Panc1 (cell line): ENCODE measurements at regions of chr15 and their contacts with region 1.

Region 1: GRCh38 chr15:44738340-44738984 is 2.1 kb downstream of the TRIM69 start:
- DNase-seq: no peak
- ATAC-seq: no peak
- H3K4me3 ChIP-seq: no peak overlapping the region
- H3K27ac ChIP-seq: no peak overlapping the region
- H3K4me1 ChIP-seq: peaks cover 19% of the 10 kb centered on the region
- H3K27me3 ChIP-seq: no peaks in the 10 kb centered on the region
- CTCF ChIP-seq: peak; percentile 83

Region 2: GRCh38 chr15:44593042-44593736 is 145.3 kb before region 1 on chr15:
- CTCF ChIA-PET with region 1: interaction called, 3 read pairs
- POLR2A ChIA-PET with region 1: no interaction called
- in situ Hi-C with region 1: no loop called
- intact Hi-C with region 1: loop called (anchors 10 kb)
- DNase-seq: no peak
- ATAC-seq: peak; percentile 83
- H3K4me3 ChIP-seq: no peak overlapping the region
- H3K27ac ChIP-seq: no peak overlapping the region
- H3K4me1 ChIP-seq: no peaks in the 10 kb centered on the region
- H3K27me3 ChIP-seq: no peaks in the 10 kb centered on the region
- CTCF ChIP-seq: peak; percentile 73

Region 3: GRCh38 chr15:44663409-44664308 is 74.8 kb before region 1 on chr15 and contains the start of gene SPG11:
- CTCF ChIA-PET with region 1: interaction called, 51 read pairs
- POLR2A ChIA-PET with region 1: interaction called, 4 read pairs
- in situ Hi-C with region 1: no loop called
- intact Hi-C with region 1: loop called (anchors 5 kb)
- DNase-seq: peak; percentile 91
- ATAC-seq: peak; percentile 98
- H3K4me3 ChIP-seq: peak within 1 kb of the TSS; percentile 81 to 97
- H3K27ac ChIP-seq: peak within 1 kb of the TSS; percentile 98
- H3K4me1 ChIP-seq: peaks cover 15% of the 10 kb centered on the region
- H3K27me3 ChIP-seq: no peaks in the 10 kb centered on the region
- CTCF ChIP-seq: peak; percentile 94
- total RNA-seq, gene SPG11: 55.0 TPM

Region 4: GRCh38 chr15:44763187-44763586 is 24.7 kb after region 1 on chr15:
- CTCF ChIA-PET with region 1: no interaction called
- POLR2A ChIA-PET with region 1: no interaction called
- in situ Hi-C with region 1: no loop called
- intact Hi-C with region 1: no loop called
- DNase-seq: no peak
- ATAC-seq: no peak
- H3K4me3 ChIP-seq: no peak overlapping the region
- H3K27ac ChIP-seq: no peak overlapping the region
- H3K4me1 ChIP-seq: no peaks in the 10 kb centered on the region
- H3K27me3 ChIP-seq: peaks cover 3% of the 10 kb centered on the region; the same call in 1 of the 2 replicates
- CTCF ChIP-seq: no peak